ENCODE measurements at regions of chr19 and their contacts with region 1.

Region 1: GRCh38 chr19:40529093-40529954 is 47.3 kb upstream of the SHKBP1 start:
- DNase-seq: peak; percentile 96

Region 2: DNA sequence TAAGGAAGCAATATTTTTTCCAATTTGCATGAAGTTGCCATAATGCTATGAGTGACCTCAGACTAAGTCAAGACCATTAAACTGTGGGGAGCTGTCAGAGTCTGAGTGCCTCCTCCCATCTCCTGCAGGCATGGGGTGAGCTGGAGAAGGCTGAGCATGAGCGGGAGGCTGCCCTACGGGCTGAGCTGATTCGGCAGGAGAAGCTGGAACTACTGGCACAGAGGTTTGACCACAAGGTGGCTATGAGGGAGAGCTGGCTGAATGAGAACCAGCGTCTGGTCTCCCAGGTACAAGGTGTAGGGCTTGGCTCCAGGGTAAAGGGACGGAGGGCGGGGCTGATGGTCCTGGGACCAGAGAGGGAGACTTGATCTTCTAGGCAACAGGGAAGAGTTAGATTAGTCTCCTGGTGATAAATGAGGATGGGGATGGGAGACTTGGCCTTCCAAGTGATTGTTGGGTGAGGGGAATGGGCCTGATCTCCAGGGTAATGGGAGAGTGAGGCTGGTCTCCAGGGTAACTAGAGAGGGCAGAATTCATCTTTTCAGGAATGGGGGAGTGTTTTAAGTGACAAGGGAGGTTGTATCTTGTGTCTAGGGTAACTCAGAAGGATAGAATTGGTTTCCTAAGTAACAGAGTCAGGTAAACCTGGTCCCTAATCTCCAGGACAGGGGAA is 26.5 kb before region 1 on chr19:
- intact Hi-C with region 1: loop called in 1 of 2 experiments (anchors 1 kb)
- DNase-seq: no peak

Region 3: DNA sequence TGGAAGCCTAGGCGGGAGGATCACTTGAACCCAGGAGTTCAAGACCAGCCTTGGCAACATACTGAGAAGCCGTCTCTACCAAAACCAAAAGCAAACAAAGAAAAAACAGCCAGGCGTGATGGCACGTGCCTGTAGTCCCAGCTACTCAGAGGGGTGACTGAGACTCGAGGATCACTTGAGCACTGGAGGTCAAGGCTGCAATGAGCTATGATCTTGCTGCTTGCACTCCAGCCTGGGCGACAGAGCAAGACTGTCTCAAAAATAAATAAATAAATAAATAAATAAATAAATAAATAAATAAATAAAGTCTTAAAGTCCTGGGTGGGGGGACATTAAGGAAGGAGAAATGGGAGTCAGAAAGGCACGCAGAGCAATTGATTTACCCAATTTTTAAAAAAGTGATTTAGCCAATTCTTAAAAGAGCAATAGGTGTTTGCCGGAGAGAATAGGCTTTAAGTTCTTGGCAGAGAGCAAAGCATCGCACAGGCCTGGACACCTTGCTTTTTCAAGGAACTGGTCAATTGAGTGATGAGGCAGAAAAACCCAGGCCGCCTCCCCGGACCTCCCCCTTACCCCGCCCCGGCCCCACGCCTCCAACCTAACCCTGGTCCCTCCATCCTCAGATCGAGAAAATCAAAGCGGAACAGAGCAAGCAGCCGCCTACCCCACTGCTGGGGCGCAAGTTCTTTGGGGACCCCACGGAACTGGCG is 37.9 kb after region 1 on chr19:
- intact Hi-C with region 1: loop called in 1 of 2 experiments (anchors 1 kb)
- DNase-seq: no peak

Region 4: DNA sequence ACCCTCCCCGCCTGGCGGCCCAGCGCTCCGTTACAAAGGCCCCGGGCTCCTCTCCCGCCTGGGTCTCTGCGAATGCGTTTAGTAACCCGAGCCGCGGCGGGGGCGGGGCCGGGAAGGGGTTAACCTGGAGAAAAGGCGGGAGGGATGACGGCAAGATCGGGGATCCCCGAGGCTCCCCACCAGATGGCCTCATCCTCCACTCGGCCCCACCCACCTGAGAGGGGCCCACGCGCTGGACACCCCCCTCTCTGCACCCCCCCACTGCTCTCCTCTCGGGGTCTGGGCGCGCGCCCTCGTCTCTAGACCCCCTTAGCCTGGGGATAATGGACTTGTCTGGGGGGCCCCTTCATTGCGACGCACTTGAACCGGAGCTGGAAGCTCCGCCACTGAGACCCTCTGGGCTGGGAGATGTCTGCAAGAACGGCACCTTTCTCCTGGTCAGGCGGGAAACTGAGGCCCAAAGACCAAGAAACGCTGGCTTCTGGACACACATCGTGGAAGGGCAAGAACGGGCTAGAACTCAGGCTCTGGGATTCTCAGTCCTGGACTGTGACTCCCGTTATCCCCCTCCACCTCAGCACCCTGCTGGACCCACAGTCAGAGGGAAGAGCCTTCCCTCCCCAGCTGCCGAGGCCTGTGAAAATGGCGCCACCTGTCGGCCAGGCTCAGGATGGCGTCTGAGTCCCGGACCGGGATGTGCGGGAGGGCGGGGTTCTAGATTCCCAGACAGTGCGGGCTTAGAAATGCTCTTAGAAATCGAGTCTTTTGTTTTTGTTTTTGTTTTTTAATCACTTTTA is 69.0 kb after region 1 on chr19:
- intact Hi-C with region 1: loop called (anchors 5 to 10 kb)
- DNase-seq: peak; percentile 96

Region 5: DNA sequence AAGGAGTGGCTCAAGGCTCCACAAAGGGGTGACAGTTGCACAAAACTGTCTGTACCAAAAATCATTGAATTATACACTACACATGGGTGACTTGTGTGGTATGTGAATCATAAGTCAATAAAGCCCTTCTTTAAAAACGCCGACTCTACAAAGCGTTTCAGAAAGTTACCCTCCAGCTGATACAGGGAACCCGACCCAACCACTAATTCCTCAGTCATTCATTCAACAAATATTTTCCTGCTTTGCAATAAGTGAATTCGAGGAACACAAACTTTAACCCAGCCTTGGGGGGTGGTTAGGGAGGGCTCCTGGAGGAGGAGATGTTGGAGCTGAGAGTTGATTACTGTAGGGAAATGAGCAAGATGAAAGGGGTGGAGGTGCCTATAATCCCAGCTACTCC is 103.9 kb after region 1 on chr19:
- intact Hi-C with region 1: loop called in 1 of 2 experiments (anchors 5 kb)
- DNase-seq: no peak

Region 6: DNA sequence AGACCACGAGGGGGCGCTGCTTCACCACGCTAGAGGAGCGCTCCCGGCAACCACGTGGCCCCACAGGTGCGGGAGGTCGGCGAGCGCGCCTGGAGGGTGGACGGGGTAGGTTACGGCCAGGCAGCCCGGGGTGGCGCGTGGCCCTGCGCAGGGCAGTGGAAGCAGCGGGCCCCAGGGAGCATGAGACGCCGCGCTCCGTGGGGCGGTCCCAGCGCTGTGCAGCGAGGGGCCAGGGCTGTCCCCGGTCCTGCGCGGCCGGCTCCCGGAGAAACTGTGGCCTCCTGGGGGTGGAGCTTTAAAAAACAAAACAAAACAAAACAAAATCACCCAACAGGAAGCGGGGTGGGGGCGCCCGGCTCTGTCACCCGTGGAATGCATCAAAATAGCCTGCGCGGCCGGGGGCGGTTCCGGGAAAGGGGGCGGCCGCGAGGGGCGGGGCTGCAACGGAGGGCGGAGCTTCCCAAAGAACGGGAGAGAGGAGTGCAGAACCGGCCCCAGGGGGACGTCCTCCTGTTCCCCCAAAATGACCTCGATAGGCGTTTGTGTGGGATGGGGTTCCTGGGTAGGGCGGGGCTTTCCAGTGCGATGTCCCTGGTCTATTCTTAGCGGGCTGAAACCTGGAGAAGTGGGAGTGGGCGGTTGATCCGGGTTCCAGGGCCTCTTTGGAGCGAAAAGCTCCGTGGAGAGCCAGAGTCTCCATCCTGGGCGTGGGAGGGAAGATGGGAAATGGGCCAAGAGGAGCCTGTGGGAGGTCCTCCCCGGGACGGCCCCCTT is 133.8 kb after region 1 on chr19:
- intact Hi-C with region 1: no loop called
- DNase-seq: peak; percentile 97

Region 7: DNA sequence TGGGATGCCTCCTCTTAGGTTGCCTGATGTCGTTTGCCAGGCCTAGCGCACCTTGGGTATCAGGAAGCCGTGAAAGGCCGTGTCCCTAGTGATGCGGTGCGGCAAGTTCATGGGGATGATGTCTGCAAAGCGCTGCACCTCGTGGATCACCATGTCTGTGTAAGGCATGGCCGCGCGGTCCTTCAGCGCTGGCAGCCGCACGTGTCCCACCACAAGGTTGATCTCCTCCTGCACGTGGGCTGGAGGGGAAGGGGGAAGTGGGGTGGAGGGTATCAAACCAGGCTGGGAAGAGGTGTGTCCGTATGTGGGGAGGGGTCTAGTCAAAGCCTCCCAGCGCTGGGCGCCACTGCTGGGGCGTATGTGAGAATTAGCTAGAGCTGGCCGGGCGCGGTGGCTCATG is 292.8 kb after region 1 on chr19:
- intact Hi-C with region 1: no loop called
- DNase-seq: no peak

Measured in posterior vena cava (tissue), 2 donors.